ENCODE measurements at regions of chr19 and their contacts with region 1.

Region 1: GRCh38 chr19:42440357-42441048 is 2.2 kb downstream of the CXCL17 start:
- DNase-seq: peak; percentile 71 to 76 (median 74)
- H3K4me3 ChIP-seq: no peak overlapping the region
- H3K4me3 Mint-ChIP-seq: peak overlapping the region in 7 of 8 donors; percentile 15 to 87 (median 62)
- H3K27ac ChIP-seq: no peak overlapping the region
- H3K27ac Mint-ChIP-seq: peak overlapping the region; percentile 28 to 92 (median 79)
- H3K4me1 ChIP-seq: peaks cover 27% of the 10 kb centered on the region
- H3K4me1 Mint-ChIP-seq: peaks cover 21 to 42% (median 33%) of the 10 kb centered on the region in 4 donors
- H3K27me3 ChIP-seq: no peaks in the 10 kb centered on the region
- H3K27me3 Mint-ChIP-seq: no peaks in the 10 kb centered on the region

Region 2: DNA sequence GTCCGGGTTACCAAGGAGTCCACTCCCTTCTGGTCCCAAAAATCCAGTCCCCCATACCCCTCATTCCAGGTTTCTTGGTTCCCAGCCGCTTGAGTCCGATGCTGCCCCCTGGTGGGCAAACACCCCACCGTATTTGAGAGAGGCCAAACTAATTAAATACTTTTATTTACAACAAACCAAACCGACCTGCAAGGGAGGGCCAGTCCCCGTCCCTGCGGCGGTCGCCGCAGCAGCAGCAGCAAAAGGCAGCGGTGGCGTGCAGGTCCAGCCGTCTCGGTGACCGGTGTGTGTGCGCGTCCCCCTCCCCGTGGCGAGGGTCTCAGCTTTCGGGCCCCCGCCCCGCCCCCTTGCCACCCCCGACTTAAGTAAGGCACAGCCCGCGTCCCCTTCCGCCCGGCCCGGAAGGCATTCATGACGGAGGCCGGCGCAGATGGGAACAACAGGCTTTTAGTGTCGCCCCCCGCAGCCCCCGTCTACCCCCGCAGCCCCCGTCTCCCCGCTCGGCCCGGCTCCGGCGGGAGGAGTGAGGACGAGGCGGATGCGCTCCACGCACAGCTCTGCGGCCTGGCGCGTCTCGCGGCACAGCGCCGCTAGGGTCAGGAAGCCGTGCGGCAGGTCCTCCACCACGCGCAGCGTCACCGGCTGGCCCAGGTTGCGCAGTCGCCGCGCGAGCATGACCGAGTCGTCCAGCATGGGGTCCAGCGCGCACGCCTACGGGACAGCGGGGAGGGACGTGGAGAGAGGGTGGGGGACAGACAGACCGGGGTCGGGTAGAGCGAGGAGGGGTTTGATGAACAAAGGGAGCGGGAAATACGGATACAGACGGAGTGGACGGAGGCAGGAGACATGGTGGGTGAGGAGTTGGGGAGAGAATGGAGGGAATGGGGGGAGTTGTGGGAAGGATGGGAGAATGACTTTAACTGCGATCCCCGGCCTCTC is 38.9 kb before region 1 on chr19:
- CTCF ChIA-PET with region 1: interaction called, 10 read pairs
- POLR2A ChIA-PET with region 1: interaction called, 4 read pairs
- intact Hi-C with region 1: no loop called
- DNase-seq: peak; percentile 63 to 79 (median 68)
- H3K4me3 ChIP-seq: peak overlapping the region; percentile 23 to 52
- H3K4me3 Mint-ChIP-seq: peak overlapping the region; percentile 82 to 91 (median 84)
- H3K27ac ChIP-seq: peak overlapping the region; percentile 29
- H3K27ac Mint-ChIP-seq: peak overlapping the region; percentile 64 to 88 (median 78)
- H3K4me1 ChIP-seq: peaks cover 30% of the 10 kb centered on the region
- H3K4me1 Mint-ChIP-seq: peaks cover 26 to 53% (median 39%) of the 10 kb centered on the region in 4 donors
- H3K27me3 ChIP-seq: no peaks in the 10 kb centered on the region
- H3K27me3 Mint-ChIP-seq: no peaks in the 10 kb centered on the region

Region 3: GRCh38 chr19:42455621-42456081 is 15.1 kb after region 1 on chr19:
- CTCF ChIA-PET with region 1: interaction called, 72 read pairs
- POLR2A ChIA-PET with region 1: interaction called, 16 read pairs
- intact Hi-C with region 1: loop called (anchors 1 kb)
- DNase-seq: no peak
- H3K4me3 ChIP-seq: no peak overlapping the region
- H3K4me3 Mint-ChIP-seq: no peak overlapping the region
- H3K27ac ChIP-seq: no peak overlapping the region
- H3K27ac Mint-ChIP-seq: no peak overlapping the region
- H3K4me1 ChIP-seq: peaks cover 4% of the 10 kb centered on the region
- H3K4me1 Mint-ChIP-seq: peaks cover 0 to 6% (median under 1%) of the 10 kb centered on the region in 4 donors
- H3K27me3 ChIP-seq: no peaks in the 10 kb centered on the region
- H3K27me3 Mint-ChIP-seq: peaks cover 0 to 2% of the 10 kb centered on the region in 2 donors

Region 4: GRCh38 chr19:42529248-42529764 is 88.8 kb after region 1 on chr19:
- CTCF ChIA-PET with region 1: interaction called, 46 read pairs
- POLR2A ChIA-PET with region 1: interaction called, 10 read pairs
- intact Hi-C with region 1: no loop called
- DNase-seq: peak; percentile 64 to 72 (median 68)
- H3K4me3 ChIP-seq: peak overlapping the region; percentile 48 to 63
- H3K4me3 Mint-ChIP-seq: peak overlapping the region; percentile 81 to 94 (median 88)
- H3K27ac ChIP-seq: peak overlapping the region; percentile 47
- H3K27ac Mint-ChIP-seq: peak overlapping the region; percentile 75 to 96 (median 88)
- H3K4me1 ChIP-seq: peaks cover 35% of the 10 kb centered on the region
- H3K4me1 Mint-ChIP-seq: peaks cover 23 to 40% (median 33%) of the 10 kb centered on the region in 4 donors
- H3K27me3 ChIP-seq: no peaks in the 10 kb centered on the region
- H3K27me3 Mint-ChIP-seq: no peaks in the 10 kb centered on the region